Natural killer cell (primary cell): ENCODE measurements at regions of chr6 and their contacts with region 1.

Region 1: GRCh38 chr6:27146706-27147505 is 100.6 kb upstream of the PRSS16 start:
- DNase-seq: peak; percentile 74 to 97
- ATAC-seq: peak; percentile 76 to 88 (median 82)
- H3K4me3 ChIP-seq: peak overlapping the region; percentile 74
- H3K4me3 Mint-ChIP-seq: no peak overlapping the region
- H3K27ac ChIP-seq: peak overlapping the region; percentile 88
- H3K27ac Mint-ChIP-seq: no peak overlapping the region
- H3K4me1 ChIP-seq: peaks cover 23% of the 10 kb centered on the region
- H3K4me1 Mint-ChIP-seq: peaks cover 0 to 3% of the 10 kb centered on the region in 2 donors
- H3K27me3 ChIP-seq: no peaks in the 10 kb centered on the region
- H3K27me3 Mint-ChIP-seq: no peaks in the 10 kb centered on the region
- CTCF ChIP-seq: no peak

Region 2: GRCh38 chr6:26045065-26045927 is 1101.6 kb before region 1 on chr6:
- intact Hi-C with region 1: loop called (anchors 2 kb)
- DNase-seq: peak; percentile 64 to 92
- ATAC-seq: peak; percentile 52 to 73 (median 64)
- H3K4me3 ChIP-seq: peak overlapping the region; percentile 64
- H3K4me3 Mint-ChIP-seq: peak overlapping the region; percentile 95
- H3K27ac ChIP-seq: peak overlapping the region; percentile 91
- H3K27ac Mint-ChIP-seq: peak overlapping the region; percentile 97 to 98
- H3K4me1 ChIP-seq: peaks cover 26% of the 10 kb centered on the region
- H3K4me1 Mint-ChIP-seq: peaks cover 25 to 28% of the 10 kb centered on the region in 2 donors
- H3K27me3 ChIP-seq: no peaks in the 10 kb centered on the region
- H3K27me3 Mint-ChIP-seq: no peaks in the 10 kb centered on the region
- CTCF ChIP-seq: no peak

Region 3: DNA sequence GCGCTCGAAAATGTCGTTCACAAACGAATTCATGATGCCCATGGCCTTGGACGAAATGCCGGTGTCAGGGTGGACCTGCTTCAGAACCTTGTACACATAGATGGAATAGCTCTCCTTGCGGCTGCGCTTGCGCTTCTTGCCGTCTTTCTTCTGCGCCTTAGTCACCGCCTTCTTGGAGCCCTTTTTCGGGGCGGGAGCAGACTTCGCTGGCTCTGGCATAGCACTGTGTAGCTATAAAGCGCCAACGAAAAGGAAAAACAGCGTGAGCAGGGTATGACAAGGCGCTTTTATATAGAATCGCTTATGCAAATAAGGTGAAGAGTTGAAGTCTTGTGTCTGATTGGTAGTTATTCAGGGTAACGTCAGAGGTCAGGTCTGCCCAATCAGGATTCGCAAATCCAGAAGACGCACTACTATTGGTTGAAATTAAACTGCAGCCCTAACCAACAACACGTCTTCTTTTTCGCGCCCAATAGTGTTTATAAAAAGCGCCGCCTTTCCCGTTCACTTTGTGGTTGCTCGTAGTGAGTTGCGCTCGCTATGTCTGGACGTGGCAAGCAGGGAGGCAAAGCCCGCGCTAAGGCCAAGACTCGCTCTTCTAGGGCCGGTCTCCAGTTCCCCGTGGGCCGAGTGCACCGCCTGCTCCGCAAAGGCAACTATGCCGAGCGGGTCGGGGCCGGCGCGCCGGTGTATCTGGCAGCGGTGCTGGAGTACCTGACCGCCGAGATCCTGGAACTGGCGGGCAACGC is 14.2 kb before region 1 on chr6:
- intact Hi-C with region 1: loop called (anchors 1 kb)
- DNase-seq: peak; percentile 87 to 98
- ATAC-seq: peak; percentile 82 to 95 (median 87)
- H3K4me3 ChIP-seq: peak overlapping the region; percentile 65
- H3K4me3 Mint-ChIP-seq: no peak overlapping the region
- H3K27ac ChIP-seq: peak overlapping the region; percentile 85
- H3K27ac Mint-ChIP-seq: no peak overlapping the region
- H3K4me1 ChIP-seq: peaks cover 29% of the 10 kb centered on the region
- H3K4me1 Mint-ChIP-seq: peaks cover 5 to 6% of the 10 kb centered on the region in 2 donors
- H3K27me3 ChIP-seq: no peaks in the 10 kb centered on the region
- H3K27me3 Mint-ChIP-seq: no peaks in the 10 kb centered on the region
- CTCF ChIP-seq: no peak

Region 4: GRCh38 chr6:27871924-27872638 is 725.2 kb after region 1 on chr6:
- intact Hi-C with region 1: loop called (anchors 5 kb)
- DNase-seq: peak; percentile 76 to 97
- ATAC-seq: peak; percentile 73 to 82 (median 78)
- H3K4me3 ChIP-seq: peak overlapping the region; percentile 68
- H3K4me3 Mint-ChIP-seq: peak overlapping the region; percentile 99
- H3K27ac ChIP-seq: peak overlapping the region; percentile 95
- H3K27ac Mint-ChIP-seq: peak overlapping the region; percentile 100
- H3K4me1 ChIP-seq: peaks cover 32% of the 10 kb centered on the region
- H3K4me1 Mint-ChIP-seq: peaks cover 44 to 50% of the 10 kb centered on the region in 2 donors
- H3K27me3 ChIP-seq: no peaks in the 10 kb centered on the region
- H3K27me3 Mint-ChIP-seq: no peaks in the 10 kb centered on the region
- CTCF ChIP-seq: no peak